ENCODE measurements at regions of chr1 and their contacts with region 1.

Region 1: DNA sequence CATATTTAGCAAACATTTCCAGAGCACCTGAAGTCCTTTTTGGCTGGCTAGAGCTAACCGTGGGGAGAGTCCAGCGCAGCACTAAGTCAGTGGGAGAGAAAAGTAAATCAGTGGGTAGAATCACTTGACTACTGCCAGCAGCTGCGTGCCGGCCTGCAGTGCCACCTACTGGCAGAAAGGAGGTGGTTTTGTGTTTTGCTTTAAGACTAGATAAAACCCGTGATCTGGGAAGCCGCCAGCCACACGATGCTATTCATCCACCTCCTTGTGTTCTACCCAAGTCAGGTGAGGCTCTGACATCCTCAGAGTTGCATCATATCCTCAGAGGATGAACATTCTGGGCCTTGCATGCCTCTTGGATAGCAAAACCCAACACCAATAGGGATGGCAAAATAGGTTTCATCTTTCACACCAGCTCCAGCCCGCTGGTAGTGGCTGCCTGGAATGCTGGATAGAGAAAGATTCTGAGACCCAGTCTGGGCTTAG is 14.1 kb upstream of the HEYL start:
- DNase-seq: peak; percentile 87

Region 2: DNA sequence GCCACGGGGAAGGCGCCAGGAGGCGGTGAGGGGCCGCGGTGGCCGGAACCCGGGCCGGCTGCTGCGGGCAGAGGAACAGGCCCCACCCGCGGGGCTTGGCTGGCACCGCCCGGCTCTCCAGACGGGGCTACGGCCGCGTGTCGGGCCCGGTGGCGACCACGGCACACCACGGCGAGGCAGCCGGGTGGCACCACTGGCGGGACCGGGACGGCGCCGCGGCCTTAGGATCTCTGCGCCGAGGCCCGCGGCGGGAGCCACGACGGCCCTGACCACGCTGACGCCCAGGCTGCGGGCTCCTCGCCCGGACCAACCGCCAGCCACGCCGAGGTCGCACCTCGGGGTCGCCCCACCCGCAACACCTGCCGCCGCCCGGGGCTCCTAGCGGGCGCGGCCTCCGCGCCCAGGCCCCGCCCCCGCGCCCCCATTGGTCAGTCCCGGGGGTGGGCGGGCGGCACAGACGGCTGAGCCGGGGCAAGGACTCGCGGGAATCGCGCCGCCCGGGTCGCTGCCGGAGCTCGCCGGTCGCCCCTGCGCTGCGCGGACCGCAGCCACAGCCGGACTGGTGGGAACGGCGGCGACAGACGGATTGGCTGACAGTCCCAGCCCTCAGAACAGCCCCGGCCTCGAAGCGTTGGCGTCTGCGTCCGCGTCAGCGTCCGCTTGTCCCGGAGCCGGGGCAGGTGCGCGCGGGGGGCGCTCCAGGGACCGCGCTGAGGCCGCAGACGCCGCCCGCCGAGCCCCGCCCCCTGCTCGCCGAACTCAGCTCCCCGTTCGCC is 162.3 kb before region 1 on chr1 and contains the start of gene BMP8A:
- intact Hi-C with region 1: no loop called
- DNase-seq: no peak
- total RNA-seq, gene BMP8A: 1.5 TPM

Region 3: DNA sequence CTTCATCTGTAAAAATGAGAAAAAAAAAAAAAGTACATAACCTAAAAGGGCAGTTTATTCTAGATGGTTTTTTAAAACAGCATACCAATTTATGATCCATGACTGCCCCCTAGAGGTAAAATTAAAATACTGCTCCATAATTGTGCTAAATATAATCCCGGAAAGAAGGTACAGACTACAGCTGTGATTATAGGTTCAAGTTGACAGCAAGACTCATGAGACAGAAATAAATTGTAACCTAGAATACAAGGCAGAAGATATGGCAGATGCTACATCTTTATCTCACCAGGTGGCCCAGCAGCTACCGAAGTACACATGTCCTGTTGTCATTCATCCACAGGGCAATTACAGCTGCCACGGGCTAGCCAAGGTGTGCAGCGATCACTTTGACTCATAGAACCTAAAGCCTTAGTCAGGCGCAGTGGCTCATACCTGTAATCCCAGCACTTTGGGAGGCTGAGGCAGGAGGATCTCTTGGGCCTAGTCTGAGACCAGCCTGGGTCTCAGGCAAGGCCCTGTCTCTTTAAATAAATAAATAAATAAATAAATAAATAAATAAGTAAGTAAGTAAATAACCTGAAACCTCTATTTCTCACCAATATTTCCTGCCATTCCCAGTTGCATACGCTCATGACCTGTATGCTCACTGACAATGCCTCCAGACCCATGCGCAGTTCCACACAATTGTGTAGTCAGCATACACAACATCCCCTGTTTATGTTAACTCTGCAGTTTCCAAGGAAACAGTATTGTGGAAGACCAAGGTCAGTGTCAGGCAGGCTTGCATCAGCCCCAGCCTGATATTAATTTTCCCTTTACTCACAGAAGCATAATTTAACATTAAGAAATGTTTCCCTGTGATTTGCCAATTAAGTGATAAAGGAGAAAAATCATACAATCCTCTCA is 66.8 kb after region 1 on chr1:
- intact Hi-C with region 1: loop called (anchors 5 kb)
- DNase-seq: no peak

Measured in cardiac septum (tissue), 1 donor.